ENCODE measurements at regions of chr9 and their contacts with region 1.

Region 1: GRCh38 chr9:136400038-136400834 is at the start of gene SNAPC4:
- DNase-seq: peak; percentile 84
- H3K4me3 Mint-ChIP-seq: peak within 1 kb of the TSS; percentile 84
- H3K27ac Mint-ChIP-seq: peak within 1 kb of the TSS; percentile 64
- H3K4me1 Mint-ChIP-seq: peaks cover 34% of the 10 kb centered on the region
- H3K27me3 Mint-ChIP-seq: no peaks in the 10 kb centered on the region
- total RNA-seq, gene SNAPC4: 22.7 and 22.9 TPM in 2 replicates

Region 2: DNA sequence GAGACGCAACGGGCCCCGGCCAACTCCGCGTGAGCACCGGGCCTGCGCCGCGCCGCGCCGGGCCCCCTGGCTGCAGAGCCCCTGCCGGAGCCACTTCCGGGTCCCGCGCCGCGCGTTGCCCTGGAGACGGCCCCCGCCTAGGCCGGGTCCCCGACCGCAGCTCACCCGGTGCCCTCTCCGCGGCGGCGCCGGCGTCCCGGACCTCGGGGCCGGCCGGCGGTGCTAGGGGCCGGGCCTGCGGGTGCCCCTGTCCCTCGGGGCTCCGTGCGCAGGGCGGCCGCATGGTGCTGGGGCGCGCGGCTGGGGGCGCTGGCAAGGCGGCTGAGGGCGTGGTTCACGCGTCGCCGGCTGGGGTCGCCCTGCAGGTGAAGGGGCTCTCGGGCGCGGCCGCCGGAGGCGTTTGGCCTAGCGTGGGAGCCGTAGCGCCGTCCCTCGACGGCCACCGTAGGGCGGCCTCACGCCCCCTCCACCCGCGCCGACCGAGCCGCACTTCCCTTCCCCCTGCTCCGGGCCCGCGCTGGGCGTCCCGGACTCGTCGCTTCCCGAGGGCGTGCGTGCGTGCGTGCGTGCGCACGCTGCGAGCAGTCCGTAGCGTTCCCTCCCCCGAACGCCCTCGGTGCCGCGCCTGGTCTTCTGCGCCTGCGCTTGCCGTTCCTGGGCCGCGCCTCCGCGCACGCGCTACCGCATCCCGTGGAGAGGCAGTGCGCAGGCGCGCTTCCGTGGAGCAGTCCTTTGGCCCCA is 281.7 kb before region 1 on chr9 and contains the start of gene TMEM250:
- intact Hi-C with region 1: loop called (anchors 10 kb)
- DNase-seq: peak; percentile 95
- H3K4me3 Mint-ChIP-seq: peak within 1 kb of the TSS; percentile 83
- H3K27ac Mint-ChIP-seq: peak within 1 kb of the TSS; percentile 78
- H3K4me1 Mint-ChIP-seq: peaks cover 9% of the 10 kb centered on the region
- H3K27me3 Mint-ChIP-seq: no peaks in the 10 kb centered on the region
- total RNA-seq, gene TMEM250: 43.1 and 43.5 TPM in 2 replicates

Region 3: GRCh38 chr9:136363606-136364370 is 36.4 kb before region 1 on chr9 and contains the start of gene DNLZ:
- intact Hi-C with region 1: loop called (anchors 1 kb)
- DNase-seq: peak; percentile 82
- H3K4me3 Mint-ChIP-seq: peak within 1 kb of the TSS; percentile 81
- H3K27ac Mint-ChIP-seq: peak within 1 kb of the TSS; percentile 87
- H3K4me1 Mint-ChIP-seq: no peaks in the 10 kb centered on the region
- H3K27me3 Mint-ChIP-seq: no peaks in the 10 kb centered on the region
- total RNA-seq, gene DNLZ: 25.4 and 31.0 TPM in 2 replicates

Region 4: DNA sequence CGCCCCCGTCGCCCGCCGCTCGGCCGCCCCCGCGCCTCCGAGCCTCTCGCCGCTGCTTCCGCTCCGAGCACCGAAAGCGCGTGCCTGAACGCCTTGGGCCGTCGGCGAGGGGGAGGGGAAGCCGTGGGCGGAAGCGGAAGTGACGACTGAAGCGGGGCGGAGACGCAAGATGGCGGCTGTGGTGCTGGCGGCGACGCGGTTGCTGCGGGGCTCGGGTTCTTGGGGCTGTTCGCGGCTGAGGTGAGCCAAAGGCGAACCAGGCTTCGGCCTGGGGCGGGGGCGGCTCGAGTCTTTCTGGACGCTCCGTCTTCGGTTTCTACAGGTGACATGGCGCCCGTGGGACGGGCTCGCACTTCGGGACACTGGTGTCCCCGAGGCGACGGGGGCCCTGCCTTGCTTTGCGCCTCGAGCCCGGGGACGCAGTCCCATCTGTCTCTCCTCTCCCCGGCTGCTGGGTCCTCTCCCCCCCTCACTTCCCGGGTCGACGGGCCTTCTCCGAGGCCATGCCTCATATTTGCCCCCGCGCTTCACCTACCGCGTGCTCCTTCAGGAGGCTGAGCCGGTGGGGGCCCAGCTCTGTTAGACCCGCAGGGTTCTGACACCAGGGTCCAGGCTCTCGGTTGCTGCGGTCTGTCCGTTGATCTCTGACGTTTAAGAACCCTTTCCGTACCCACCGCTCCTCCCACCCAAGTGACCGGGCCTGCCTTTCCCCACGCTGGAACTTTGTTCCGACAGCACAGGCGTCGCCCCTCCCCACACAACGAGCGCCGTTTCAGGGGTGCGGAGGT is 10.5 kb after region 1 on chr9 and contains the starts of genes ENTR1 and PMPCA:
- intact Hi-C with region 1: loop called (anchors 1 kb)
- DNase-seq: peak; percentile 93
- H3K4me3 Mint-ChIP-seq: peak within 1 kb of the TSS; percentile 95
- H3K27ac Mint-ChIP-seq: peak within 1 kb of the TSS; percentile 95
- H3K4me1 Mint-ChIP-seq: peaks cover 35% of the 10 kb centered on the region
- H3K27me3 Mint-ChIP-seq: no peaks in the 10 kb centered on the region
- total RNA-seq, gene ENTR1: 66.4 and 75.6 TPM in 2 replicates
- total RNA-seq, gene PMPCA: 111 TPM in 2 replicates

Region 5: GRCh38 chr9:136482793-136483588 is 82.8 kb after region 1 on chr9 and contains the start of gene SEC16A:
- intact Hi-C with region 1: loop called (anchors 5 kb)
- DNase-seq: peak; percentile 98
- H3K4me3 Mint-ChIP-seq: peak within 1 kb of the TSS; percentile 98
- H3K27ac Mint-ChIP-seq: peak within 1 kb of the TSS; percentile 98
- H3K4me1 Mint-ChIP-seq: peaks cover 18% of the 10 kb centered on the region
- H3K27me3 Mint-ChIP-seq: no peaks in the 10 kb centered on the region
- total RNA-seq, gene SEC16A: 74.5 and 77.5 TPM in 2 replicates

Measured in activated T-helper 2 cell treated with anti-CD3 and anti-CD28 coated beads, Interferon-gamma antibody, Interleukin-2, Interleukin-4, amounts not matched to agents 10 μg/mL and 5 μg/mL and 100 μg/mL, durations not matched to agents 14 hours and 24 hours and 36 hours (primary cell).